ENCODE measurements at regions of chr16 and their contacts with region 1.

Region 1: DNA sequence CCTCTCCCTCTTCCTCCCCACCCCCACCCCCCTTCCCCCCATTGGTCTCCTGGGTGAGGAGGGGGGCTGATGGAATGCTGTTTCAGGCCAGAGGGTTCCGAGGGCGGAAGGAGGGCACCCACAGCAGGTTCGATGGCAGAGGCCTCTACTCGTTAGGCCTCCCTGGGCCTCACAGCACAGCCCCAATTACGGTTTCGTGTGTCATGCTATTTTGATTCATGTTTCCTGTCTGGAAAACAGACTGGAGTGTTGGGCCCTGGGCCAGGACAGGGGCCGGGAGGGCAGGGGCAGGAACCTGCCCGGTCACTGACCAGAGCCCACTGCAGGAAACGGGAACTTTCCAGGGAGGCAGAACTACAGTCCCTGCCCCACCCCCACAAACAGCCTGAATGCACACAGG is 138.2 kb downstream of the C16orf95 start:
- DNase-seq: peak; percentile 97
- H3K4me3 ChIP-seq: no peak overlapping the region
- H3K27ac ChIP-seq: peak overlapping the region; percentile 77
- H3K4me1 ChIP-seq: peaks cover 24% of the 10 kb centered on the region
- H3K27me3 ChIP-seq: no peaks in the 10 kb centered on the region
- CTCF ChIP-seq: no peak
- POLR2A ChIP-seq: peak; percentile 45

Region 2: DNA sequence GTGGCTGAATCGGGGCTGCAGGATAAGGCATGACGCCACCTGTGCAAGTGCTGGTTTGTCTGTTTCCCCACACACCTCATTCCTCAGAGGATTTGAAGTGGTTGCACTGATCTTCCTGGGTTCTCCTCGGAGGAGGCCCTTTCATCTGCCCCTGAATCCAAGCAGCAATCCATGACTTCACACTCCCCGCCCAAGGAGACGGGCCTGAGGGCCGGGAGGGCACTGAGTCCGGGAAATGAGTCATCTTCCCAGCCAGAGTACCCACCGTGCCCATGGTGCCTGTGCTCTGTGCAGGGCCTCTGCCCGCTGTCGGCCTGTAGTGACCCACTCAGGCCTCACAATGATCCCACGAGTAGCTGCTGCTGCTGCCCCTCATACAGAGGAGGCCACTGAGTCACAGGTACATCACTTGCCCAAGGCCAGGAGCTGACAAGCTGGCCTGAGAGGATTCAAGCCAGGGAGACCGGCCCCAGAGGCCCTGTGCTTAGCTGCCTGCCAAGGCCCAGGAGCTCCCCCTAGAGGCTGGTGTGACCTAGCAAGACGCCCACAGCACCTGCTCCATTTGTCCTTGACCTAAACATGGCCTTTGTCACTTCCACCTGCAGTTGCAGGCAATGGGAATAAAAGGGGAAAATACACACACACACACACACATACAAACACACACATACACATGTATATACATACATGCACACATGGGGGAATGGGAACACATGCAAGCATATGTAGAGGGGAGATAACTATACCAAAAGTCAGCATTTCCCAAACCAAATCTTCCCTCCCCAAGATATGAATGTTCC is 101.8 kb before region 1 on chr16:
- CTCF ChIA-PET with region 1: interaction called, 5 read pairs
- POLR2A ChIA-PET with region 1: no interaction called
- dilution Hi-C with region 1: no loop called
- intact Hi-C with region 1: loop called (anchors 1 kb)
- DNase-seq: peak; percentile 87
- H3K4me3 ChIP-seq: no peak overlapping the region
- H3K27ac ChIP-seq: peak overlapping the region; percentile 52
- H3K4me1 ChIP-seq: peaks cover 11% of the 10 kb centered on the region
- H3K27me3 ChIP-seq: no peaks in the 10 kb centered on the region
- CTCF ChIP-seq: peak; percentile 88 to 91
- POLR2A ChIP-seq: no peak

Region 3: DNA sequence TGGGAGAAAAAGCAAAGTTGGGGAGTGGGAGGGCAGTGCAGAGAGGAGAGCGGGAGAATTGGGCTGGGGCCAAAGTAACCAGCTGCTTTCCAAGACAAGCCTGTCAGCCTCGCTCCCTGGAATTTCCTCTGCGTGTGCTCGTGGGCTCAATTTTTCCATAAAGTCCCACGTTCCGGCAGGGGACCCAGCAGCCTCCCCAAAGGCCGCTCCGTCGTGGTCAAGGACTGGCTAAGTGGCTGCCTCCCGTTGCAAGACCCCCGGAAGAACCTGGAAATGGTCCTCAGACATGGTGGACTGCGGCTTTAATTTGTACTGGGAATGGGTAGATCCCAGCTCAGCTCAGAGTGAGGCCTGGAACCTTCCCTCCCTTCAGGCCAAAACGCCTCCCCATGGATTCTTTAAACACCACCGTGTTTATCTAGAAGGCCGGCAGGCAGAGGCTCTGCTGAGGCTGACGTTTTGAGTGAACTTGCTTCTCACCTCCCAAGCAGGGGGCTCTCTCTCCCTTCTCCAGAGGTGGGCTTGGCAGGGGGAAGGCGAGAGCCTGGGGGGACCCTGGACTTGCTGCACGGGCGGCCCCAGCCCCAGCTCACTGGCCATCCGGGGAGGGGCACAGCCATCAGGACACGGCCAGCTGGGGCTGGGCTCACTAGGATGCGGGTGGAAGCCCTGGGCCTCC is 51.8 kb before region 1 on chr16:
- CTCF ChIA-PET with region 1: no interaction called
- POLR2A ChIA-PET with region 1: no interaction called
- dilution Hi-C with region 1: no loop called
- intact Hi-C with region 1: loop called (anchors 2 kb)
- DNase-seq: peak; percentile 82
- H3K4me3 ChIP-seq: no peak overlapping the region
- H3K27ac ChIP-seq: no peak overlapping the region
- H3K4me1 ChIP-seq: peaks cover 2% of the 10 kb centered on the region
- H3K27me3 ChIP-seq: peaks cover 1% of the 10 kb centered on the region in 2 experiments
- CTCF ChIP-seq: no peak
- POLR2A ChIP-seq: no peak